CD4-positive, alpha-beta T cell (primary cell): ENCODE measurements at regions of chr11 and their contacts with region 1.

Region 1: GRCh38 chr11:86193297-86194095 is 51.1 kb upstream of the EED start:
- DNase-seq: peak; percentile 18 to 84 (median 42)
- ATAC-seq: peak; percentile 100
- H3K4me3 ChIP-seq: peak overlapping the region; percentile 37
- H3K4me3 Mint-ChIP-seq: peak overlapping the region; percentile 94
- H3K27ac ChIP-seq: no peak overlapping the region
- H3K27ac Mint-ChIP-seq: peak overlapping the region; percentile 69
- H3K4me1 ChIP-seq: peaks cover 4% of the 10 kb centered on the region
- H3K4me1 Mint-ChIP-seq: peaks cover 15% of the 10 kb centered on the region
- H3K27me3 ChIP-seq: no peaks in the 10 kb centered on the region
- H3K27me3 Mint-ChIP-seq: no peaks in the 10 kb centered on the region
- CTCF ChIP-seq: peak; percentile 74

Region 2: GRCh38 chr11:86218125-86219084 is 24.9 kb after region 1 on chr11:
- CTCF ChIA-PET with region 1: interaction called, 3 read pairs
- POLR2A ChIA-PET with region 1: no interaction called
- intact Hi-C with region 1: loop called in 1 of 2 experiments (anchors 2 kb)
- DNase-seq: peak; percentile 26 to 82 (median 43)
- ATAC-seq: peak; percentile 95
- H3K4me3 ChIP-seq: peak overlapping the region; percentile 21
- H3K4me3 Mint-ChIP-seq: peak overlapping the region; percentile 66
- H3K27ac ChIP-seq: no peak overlapping the region
- H3K27ac Mint-ChIP-seq: no peak overlapping the region
- H3K4me1 ChIP-seq: peaks cover 8% of the 10 kb centered on the region
- H3K4me1 Mint-ChIP-seq: peaks cover 11% of the 10 kb centered on the region
- H3K27me3 ChIP-seq: no peaks in the 10 kb centered on the region
- H3K27me3 Mint-ChIP-seq: peaks cover 31% of the 10 kb centered on the region
- CTCF ChIP-seq: peak; percentile 87